Panc1 (cell line): ENCODE measurements at regions of chr5 and their contacts with region 1.

Region 1: DNA sequence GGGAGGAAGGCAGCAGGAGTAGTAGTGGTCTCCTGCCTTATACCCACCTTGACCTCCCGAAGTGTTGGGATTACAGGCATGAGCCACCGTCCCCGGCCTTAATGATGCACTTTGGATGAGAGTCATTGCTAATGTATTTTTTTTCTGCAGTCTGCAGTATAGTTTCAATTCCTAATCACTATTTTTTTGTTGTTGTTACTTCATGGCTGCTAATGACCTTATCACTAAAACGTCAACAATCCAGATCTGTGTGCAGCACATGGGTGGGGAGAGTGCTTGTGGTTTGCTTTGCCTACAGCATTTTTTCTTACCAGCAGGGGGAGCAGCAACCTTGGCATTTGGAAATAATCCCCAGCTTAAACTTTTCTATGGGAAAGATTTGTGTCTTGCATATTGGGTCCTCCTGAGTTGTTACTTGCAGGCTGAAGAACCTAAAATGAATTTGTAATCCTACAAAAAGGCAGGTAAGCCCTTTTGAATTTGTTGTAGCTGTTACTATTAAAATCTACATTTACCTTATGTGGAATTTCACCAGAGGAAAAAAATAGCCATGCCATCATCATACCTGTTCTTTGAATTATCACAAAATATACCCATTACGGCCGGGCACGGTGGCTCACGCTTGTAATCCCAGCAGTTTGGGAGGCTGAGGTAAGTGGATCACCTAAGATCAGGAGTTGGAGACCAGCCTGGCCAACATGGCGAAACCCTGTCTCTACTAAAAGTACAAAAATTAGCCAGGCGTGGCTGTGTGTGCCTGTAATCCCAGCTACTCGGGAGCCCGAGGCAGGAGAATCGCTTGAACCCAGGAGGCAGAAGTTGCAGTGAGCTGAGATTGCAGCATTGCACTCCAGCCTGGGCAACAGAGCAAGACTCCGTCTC is 6.3 kb upstream of the MED7 start:
- DNase-seq: peak; percentile 65
- ATAC-seq: peak; percentile 93
- H3K4me3 ChIP-seq: no peak overlapping the region
- H3K27ac ChIP-seq: no peak overlapping the region
- H3K4me1 ChIP-seq: no peaks in the 10 kb centered on the region
- H3K27me3 ChIP-seq: no peaks in the 10 kb centered on the region; the same call in none of the 2 replicates
- CTCF ChIP-seq: peak; percentile 91

Region 2: GRCh38 chr5:156543348-156544145 is 605.4 kb before region 1 on chr5:
- CTCF ChIA-PET with region 1: no interaction called
- POLR2A ChIA-PET with region 1: no interaction called
- in situ Hi-C with region 1: no loop called
- intact Hi-C with region 1: no loop called
- DNase-seq: no peak
- ATAC-seq: no peak
- H3K4me3 ChIP-seq: no peak overlapping the region
- H3K27ac ChIP-seq: no peak overlapping the region
- H3K4me1 ChIP-seq: no peaks in the 10 kb centered on the region
- H3K27me3 ChIP-seq: no peaks in the 10 kb centered on the region
- CTCF ChIP-seq: no peak

Region 3: GRCh38 chr5:156981481-156981880 is 167.5 kb before region 1 on chr5:
- CTCF ChIA-PET with region 1: no interaction called
- POLR2A ChIA-PET with region 1: no interaction called
- in situ Hi-C with region 1: no loop called
- intact Hi-C with region 1: no loop called
- DNase-seq: no peak
- ATAC-seq: no peak
- H3K4me3 ChIP-seq: no peak overlapping the region
- H3K27ac ChIP-seq: no peak overlapping the region
- H3K4me1 ChIP-seq: no peaks in the 10 kb centered on the region
- H3K27me3 ChIP-seq: no peaks in the 10 kb centered on the region
- CTCF ChIP-seq: no peak

Region 4: GRCh38 chr5:157038568-157039187 is 110.3 kb before region 1 on chr5:
- CTCF ChIA-PET with region 1: no interaction called
- POLR2A ChIA-PET with region 1: no interaction called
- in situ Hi-C with region 1: no loop called
- intact Hi-C with region 1: no loop called
- DNase-seq: no peak
- ATAC-seq: no peak
- H3K4me3 ChIP-seq: no peak overlapping the region
- H3K27ac ChIP-seq: no peak overlapping the region
- H3K4me1 ChIP-seq: no peaks in the 10 kb centered on the region
- H3K27me3 ChIP-seq: no peaks in the 10 kb centered on the region
- CTCF ChIP-seq: no peak

Region 5: GRCh38 chr5:157100140-157100679 is 48.8 kb before region 1 on chr5:
- CTCF ChIA-PET with region 1: no interaction called
- POLR2A ChIA-PET with region 1: no interaction called
- in situ Hi-C with region 1: no loop called
- intact Hi-C with region 1: no loop called
- DNase-seq: peak; percentile 18
- ATAC-seq: no peak
- H3K4me3 ChIP-seq: no peak overlapping the region
- H3K27ac ChIP-seq: no peak overlapping the region
- H3K4me1 ChIP-seq: no peaks in the 10 kb centered on the region
- H3K27me3 ChIP-seq: no peaks in the 10 kb centered on the region
- CTCF ChIP-seq: no peak

Region 6: DNA sequence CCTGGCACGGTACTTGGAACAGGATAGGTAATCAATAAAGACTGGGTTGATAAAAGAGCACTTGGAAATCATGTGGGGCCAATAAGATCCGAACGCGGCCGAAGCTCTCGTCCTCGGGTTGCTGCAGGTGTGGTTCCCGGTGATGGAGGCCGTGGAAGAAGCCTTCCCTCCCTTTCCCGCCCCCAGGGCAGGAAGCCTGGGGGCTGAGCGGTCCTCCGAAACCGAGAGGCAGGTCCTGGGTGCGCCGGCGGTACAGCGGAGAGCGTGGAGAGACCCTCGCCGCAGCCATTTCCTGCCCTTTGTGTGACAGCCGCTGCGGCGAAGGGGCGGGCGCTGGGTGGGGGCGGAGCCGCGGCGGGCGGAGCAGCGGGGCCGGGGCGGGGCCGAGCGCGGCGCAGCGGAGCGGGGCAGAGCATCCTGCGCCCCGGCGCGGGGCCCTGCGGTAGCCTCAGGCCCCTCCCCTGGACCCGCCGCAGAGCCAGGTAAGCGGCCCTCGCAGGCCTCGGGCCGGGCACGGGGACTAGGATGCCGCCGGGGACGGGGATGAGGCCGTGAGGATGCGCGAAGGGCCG is 116.8 kb after region 1 on chr5 and contains the start of gene CYFIP2:
- CTCF ChIA-PET with region 1: no interaction called
- POLR2A ChIA-PET with region 1: no interaction called
- in situ Hi-C with region 1: no loop called
- intact Hi-C with region 1: loop called (anchors 2 kb)
- DNase-seq: no peak
- ATAC-seq: peak; percentile 95
- H3K4me3 ChIP-seq: peak within 1 kb of the TSS; percentile 46 to 58
- H3K27ac ChIP-seq: no peak within 1 kb of the TSS
- H3K4me1 ChIP-seq: no peaks in the 10 kb centered on the region
- H3K27me3 ChIP-seq: peaks cover 21% of the 10 kb centered on the region
- CTCF ChIP-seq: no peak
- total RNA-seq, gene CYFIP2: 0.80 TPM

Region 7: DNA sequence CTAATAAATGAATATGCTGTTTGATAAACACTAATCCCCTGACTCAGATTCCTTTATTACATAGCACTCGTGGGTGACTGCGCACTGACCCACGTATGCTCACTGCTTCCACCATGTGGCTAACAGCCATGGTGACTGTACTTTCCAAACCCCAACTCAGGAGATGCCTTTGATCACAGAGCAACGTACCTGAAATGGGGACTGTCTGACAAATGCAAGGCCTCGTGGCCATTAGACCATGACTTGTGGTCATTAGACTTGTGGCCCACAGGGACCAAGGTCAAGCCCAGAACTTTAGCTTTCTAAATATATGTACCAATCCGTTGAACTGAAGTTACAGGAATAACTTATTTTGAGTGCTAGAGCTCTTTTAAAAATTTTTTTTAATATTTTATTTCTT is 163.5 kb after region 1 on chr5:
- CTCF ChIA-PET with region 1: interaction called, 3 read pairs
- POLR2A ChIA-PET with region 1: no interaction called
- in situ Hi-C with region 1: no loop called
- intact Hi-C with region 1: loop called (anchors 1 kb)
- DNase-seq: peak; percentile 36
- ATAC-seq: peak; percentile 80; the same call in 1 of the 2 replicates
- H3K4me3 ChIP-seq: no peak overlapping the region
- H3K27ac ChIP-seq: no peak overlapping the region
- H3K4me1 ChIP-seq: no peaks in the 10 kb centered on the region
- H3K27me3 ChIP-seq: peaks cover 12% of the 10 kb centered on the region; the same call in 1 of the 2 replicates
- CTCF ChIP-seq: peak; percentile 82

Region 8: DNA sequence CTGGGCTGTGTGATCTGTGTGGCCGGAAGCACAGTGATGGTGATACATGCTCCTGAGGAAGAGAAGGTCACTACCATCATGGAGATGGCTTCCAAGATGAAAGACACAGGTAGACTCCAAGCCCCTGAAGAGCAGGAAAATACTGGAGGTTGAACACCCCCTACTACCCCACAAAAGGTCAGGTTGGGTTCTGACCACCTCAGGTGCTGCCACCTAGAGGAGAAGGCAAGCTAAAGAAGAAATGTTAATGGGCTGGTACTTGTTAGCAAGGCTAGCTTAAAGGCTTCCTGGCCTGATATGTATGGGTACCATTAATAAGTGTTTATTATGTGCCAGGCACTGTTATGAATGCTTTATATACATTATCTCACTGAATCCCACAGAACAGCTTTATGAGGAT is 322.7 kb after region 1 on chr5:
- CTCF ChIA-PET with region 1: interaction called, 4 read pairs
- POLR2A ChIA-PET with region 1: no interaction called
- in situ Hi-C with region 1: no loop called
- intact Hi-C with region 1: loop called (anchors 5 kb)
- DNase-seq: no peak
- ATAC-seq: peak; percentile 75; the same call in 1 of the 2 replicates
- H3K4me3 ChIP-seq: no peak overlapping the region
- H3K27ac ChIP-seq: no peak overlapping the region
- H3K4me1 ChIP-seq: no peaks in the 10 kb centered on the region
- H3K27me3 ChIP-seq: no peaks in the 10 kb centered on the region
- CTCF ChIP-seq: peak; percentile 78